GM10248 (cell line): ENCODE measurements at regions of chr9 and their contacts with region 1.

Region 1: GRCh38 chr9:104863180-104863883 is 64.6 kb downstream of the ABCA1 start:
- DNase-seq: peak; percentile 65
- CTCF ChIP-seq: peak; percentile 85

Region 2: DNA sequence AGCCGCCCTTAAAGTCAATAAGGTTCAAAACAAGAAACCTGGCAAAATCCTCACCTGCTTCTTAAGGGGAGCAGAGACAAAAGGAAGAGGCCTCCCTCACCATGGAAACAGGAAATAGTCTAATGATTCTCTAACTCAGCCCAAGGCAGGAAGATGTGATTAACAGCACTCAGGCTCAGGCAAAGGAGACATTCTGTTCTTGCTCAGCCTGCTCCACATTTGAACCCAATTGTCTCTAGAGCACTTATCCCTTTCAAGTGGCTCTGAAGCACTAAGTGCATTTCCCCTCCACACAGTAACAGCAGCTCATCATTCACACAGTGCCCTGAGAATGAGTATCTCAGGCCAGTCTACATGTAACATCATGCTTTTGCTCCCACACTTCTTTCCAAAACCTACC is 27.1 kb before region 1 on chr9:
- CTCF ChIA-PET with region 1: interaction called, 18 read pairs
- POLR2A ChIA-PET with region 1: no interaction called
- DNase-seq: no peak
- CTCF ChIP-seq: no peak

Region 3: GRCh38 chr9:104879555-104880309 is 16.4 kb after region 1 on chr9:
- CTCF ChIA-PET with region 1: interaction called, 12 read pairs
- POLR2A ChIA-PET with region 1: no interaction called
- DNase-seq: no peak
- CTCF ChIP-seq: no peak

Region 4: DNA sequence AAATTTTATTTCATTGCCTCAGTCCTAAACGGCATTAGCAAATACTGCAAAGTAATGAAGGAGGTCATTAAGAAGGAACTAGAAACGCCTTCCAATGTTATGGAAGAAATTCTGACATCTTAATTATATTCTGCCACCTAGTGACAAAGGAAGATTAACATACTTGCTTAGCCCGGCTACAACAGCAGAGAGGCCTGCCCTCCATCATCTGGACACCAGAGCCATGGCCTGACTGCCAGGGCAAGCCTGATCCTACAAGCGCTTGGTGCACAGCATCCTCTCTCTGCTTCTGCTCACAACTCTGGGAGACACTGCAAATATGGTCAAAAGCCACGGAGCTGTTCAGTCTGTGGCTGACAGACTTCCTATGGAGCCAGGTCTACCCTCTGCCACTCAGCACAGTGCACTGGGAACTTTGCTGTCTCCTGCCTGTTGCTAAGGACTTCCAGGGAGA is 293.8 kb after region 1 on chr9:
- CTCF ChIA-PET with region 1: interaction called, 15 read pairs
- POLR2A ChIA-PET with region 1: no interaction called
- DNase-seq: peak; percentile 66
- CTCF ChIP-seq: peak; percentile 22

Region 5: DNA sequence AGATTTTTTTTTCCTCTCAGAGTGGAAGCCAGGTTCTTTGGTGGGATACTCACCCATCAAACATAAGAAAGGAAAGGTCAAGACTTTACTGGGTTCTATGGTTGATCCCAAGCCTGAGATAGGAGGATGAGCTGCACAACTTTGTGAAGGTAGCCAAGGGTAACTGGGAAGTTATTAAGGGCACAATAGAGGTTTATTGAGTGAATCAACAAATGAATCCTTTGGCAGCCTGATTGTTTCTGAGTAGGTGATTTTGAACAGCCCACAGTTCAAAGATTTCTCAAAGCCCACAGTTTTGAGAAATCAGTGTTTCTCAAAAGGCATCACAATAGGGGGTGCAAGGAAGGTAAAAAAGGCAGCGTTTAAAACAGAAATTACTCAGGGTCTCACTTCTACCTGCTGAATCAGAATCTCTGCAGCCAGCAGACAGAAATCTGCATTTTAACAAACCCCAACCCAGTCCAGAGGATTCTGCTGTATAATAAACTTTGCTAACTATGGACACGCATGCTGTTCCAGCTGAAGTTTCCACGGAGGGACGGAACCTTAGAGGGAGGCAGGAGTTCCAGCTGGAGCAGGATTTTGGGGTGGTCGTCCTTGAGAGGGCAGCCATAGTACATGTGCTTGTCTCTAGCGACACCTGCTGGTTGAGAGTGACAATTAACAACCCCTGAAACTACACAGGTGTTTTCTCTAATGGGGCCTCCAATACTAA is 551.8 kb after region 1 on chr9:
- CTCF ChIA-PET with region 1: interaction called, 22 read pairs
- POLR2A ChIA-PET with region 1: no interaction called
- DNase-seq: peak; percentile 66
- CTCF ChIP-seq: peak; percentile 69

Region 6: DNA sequence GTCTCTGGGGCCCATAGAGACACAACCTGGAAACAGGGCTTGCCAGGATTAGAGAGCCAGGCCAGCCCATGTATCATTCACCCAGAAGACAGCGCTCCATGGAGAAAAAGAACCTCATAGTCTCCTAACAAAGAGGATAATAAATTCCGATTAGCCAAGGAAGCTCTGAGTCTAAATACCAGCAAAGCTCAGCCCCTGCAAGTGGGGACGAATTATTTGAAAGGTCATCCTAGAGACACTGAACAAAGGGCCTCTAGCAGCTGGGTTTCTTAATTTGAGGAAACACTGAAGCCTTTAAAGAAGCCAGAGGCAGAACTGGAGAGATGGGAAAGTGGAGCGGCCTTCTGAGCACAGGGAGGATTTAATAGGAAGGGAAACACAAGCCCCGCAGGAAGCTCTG is 1712.5 kb after region 1 on chr9:
- CTCF ChIA-PET with region 1: no interaction called
- POLR2A ChIA-PET with region 1: no interaction called
- DNase-seq: no peak
- CTCF ChIP-seq: no peak